ENCODE measurements at regions of chr3 and their contacts with region 1.

Region 1: DNA sequence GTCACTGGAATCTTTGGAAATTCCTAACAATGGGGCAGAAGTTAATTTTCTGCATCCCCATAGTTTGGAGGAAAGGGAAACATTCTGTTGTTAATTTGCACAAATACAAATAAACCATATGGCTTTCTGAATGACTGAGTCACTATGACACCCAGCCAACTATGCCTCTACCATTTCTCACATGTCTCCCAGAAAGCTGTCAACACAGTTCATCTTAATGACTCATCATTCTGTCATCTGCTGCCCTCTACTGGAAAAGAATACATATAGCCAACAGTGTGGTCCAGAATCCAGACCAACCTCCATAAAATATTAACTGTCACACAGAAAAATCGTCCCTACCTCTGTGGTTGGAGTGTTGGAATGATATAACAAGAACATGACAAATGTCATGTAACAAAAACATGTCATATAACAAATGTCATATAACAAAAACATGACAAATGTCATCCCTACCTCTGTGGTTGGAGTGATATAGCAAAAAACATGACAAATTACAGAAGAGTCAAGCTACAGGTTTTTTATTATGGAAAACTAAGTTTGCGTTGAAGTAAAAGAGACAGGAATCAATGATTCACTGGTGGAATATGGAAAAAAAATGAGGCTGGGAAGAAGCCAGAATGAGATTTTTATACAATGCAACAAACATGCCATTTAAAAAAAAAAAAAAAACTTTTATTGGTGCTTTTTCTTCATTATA is 47.7 kb upstream of the GYG1 start:
- DNase-seq: no peak
- ATAC-seq: peak; percentile 86

Region 2: GRCh38 chr3:148379763-148380382 is 563.8 kb before region 1 on chr3:
- intact Hi-C with region 1: loop called (anchors 5 kb)
- DNase-seq: no peak
- ATAC-seq: peak; percentile 64

Region 3: GRCh38 chr3:148800414-148800813 is 143.2 kb before region 1 on chr3:
- intact Hi-C with region 1: no loop called
- DNase-seq: no peak
- ATAC-seq: no peak

Region 4: DNA sequence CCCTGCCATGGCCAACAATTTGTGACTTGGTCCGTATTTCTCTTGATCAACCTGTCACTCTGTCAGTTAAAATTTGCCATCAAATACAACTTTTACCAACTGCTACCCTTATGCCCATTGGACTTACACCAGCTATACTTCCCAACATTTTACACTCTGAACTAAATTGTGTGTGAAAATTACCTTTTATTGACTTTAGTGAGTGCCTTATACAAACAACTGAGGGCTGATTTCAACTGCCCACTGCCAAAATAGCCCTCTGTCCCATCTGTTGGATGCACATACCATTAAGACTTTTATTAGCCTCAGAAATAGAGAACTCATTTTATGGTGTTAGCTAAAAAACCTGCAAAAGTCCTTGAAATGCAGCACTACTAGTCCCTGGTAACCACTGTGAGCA is 129.7 kb before region 1 on chr3:
- intact Hi-C with region 1: no loop called
- DNase-seq: no peak
- ATAC-seq: no peak

Region 5: DNA sequence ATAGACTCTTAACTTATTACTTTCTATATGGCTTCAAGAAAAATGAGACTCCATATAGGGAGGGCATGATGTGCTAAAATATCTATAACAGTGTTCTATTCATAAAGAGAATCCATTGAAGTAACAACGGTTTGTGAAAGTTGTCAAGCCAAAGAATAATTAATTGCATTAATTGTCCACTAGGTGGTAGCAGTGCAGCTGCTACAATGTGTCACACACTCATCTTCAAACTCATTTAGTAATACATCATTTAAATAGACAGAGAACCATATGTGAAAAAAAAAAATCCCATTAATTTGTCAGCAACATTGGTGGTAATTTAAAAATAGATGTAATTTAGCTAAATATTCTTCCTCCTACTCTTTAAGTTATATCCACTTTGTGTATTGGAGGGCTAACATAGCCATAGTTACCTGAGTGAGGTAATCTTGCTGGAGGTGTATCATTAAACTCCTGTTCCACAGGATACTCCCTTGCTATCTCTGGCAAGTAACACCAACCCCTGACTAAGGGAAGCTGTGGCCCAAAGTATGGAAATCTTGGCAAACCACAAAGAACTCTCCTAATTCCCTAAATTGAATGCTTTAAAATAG is 82.3 kb before region 1 on chr3:
- intact Hi-C with region 1: loop called (anchors 2 kb)
- DNase-seq: no peak
- ATAC-seq: no peak

Measured in Right ventricle myocardium inferior (tissue), 1 donor.